H1 (cell line): ENCODE measurements at regions of chr3 and their contacts with region 1.

Region 1: DNA sequence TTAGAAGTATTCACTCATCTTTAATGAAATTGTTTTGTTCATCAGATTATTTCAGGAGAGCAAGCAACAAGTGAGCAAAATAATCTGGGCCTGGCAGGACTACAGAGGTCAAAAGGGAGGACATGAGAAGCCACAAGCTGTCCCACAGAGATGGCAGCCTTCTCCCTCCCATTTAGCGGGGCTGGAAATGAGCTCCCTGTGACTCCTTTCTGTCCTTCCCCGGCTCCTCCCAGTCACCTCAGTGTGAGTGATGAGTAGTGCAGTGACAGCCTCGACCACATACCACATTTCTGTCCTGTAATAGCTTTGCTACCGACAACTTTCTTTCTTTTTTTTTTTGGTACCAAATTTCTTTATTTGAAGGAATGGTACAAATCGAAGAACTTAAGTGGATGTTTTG is 38.0 kb downstream of the RAB7A start:
- DNase-seq: no peak
- H3K4me3 ChIP-seq: no peak overlapping the region
- H3K27ac ChIP-seq: no peak overlapping the region
- H3K4me1 ChIP-seq: peaks cover 0 to 2% (median 0%) of the 10 kb centered on the region in 4 experiments; a peak in 3 of 7 replicates
- H3K27me3 ChIP-seq: no peaks in the 10 kb centered on the region
- CTCF ChIP-seq: no peak
- EP300 ChIP-seq: no peak
- POLR2A ChIP-seq: no peak
- RAD21 ChIP-seq: no peak

Region 2: DNA sequence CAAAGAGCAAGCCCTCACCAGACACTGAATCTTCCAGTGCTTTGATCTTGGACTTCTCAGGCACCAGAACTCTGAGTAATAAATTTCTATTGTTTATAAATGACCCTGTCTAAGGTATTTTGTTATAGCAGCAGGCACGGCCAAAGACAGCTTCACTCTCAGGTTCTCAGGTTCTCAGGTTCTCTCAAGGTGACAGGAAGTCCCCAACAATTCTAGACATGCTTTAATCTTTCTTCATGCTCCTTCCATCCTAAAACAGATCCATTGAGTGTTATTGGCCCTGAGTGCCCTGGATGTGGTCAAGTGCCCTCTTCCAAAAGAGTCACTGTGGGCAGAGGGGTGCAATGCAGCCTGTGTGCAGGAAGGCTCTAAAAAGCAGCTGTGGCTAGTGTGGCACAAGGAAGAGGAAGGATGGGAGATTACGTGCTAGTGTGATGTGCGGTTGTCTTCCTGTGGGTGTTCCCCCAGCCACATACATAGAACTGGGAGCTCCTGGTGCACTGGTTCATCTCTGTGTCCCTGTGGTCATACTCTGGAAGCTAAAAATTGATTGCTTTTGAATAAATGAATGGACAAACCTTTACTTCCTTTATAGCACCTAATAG is 49.0 kb before region 1 on chr3:
- CTCF ChIA-PET with region 1: no interaction called
- POLR2A ChIA-PET with region 1: no interaction called
- DNase-seq: no peak
- H3K4me3 ChIP-seq: no peak overlapping the region
- H3K27ac ChIP-seq: no peak overlapping the region
- H3K4me1 ChIP-seq: peaks cover 2 to 7% (median 3%) of the 10 kb centered on the region in 4 experiments
- H3K27me3 ChIP-seq: no peaks in the 10 kb centered on the region; a peak in 1 of 7 replicates
- CTCF ChIP-seq: no peak
- EP300 ChIP-seq: no peak
- POLR2A ChIP-seq: no peak
- RAD21 ChIP-seq: no peak

Region 3: DNA sequence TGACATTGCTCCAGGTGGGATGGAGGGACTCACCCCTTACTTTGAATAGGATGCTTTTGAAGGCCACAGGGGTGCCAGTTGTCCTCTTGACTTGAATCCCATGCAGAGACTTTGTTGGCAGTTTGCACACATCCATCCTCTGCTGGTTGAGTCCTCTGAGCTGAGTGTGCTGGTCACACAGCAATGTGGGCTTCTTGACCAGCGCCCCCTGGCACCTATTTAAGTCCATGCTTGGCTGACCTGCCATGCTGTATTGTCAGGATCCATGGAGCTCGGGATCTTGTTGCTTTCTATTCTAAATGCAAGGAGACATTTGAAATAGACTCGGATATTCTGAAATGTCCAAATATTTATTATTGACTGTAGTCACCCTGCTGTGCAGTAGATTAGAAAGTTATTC is 18.2 kb before region 1 on chr3:
- CTCF ChIA-PET with region 1: interaction called, 24 read pairs
- POLR2A ChIA-PET with region 1: interaction called, 6 read pairs
- DNase-seq: no peak
- H3K4me3 ChIP-seq: no peak overlapping the region
- H3K27ac ChIP-seq: no peak overlapping the region
- H3K4me1 ChIP-seq: no peaks in the 10 kb centered on the region
- H3K27me3 ChIP-seq: no peaks in the 10 kb centered on the region
- CTCF ChIP-seq: peak; percentile 36 to 63 (median 57)
- EP300 ChIP-seq: no peak
- POLR2A ChIP-seq: no peak
- RAD21 ChIP-seq: peak; percentile 33 to 52; a peak in 3 of 4 replicates